ENCODE measurements at regions of chr3 and their contacts with region 1.

Region 1: GRCh38 chr3:25594007-25594502 is 70.7 kb downstream of the TOP2B start:
- DNase-seq: no peak
- ATAC-seq: peak; percentile 52 to 58
- H3K4me3 ChIP-seq: no peak overlapping the region
- H3K27ac ChIP-seq: no peak overlapping the region
- H3K4me1 ChIP-seq: peaks cover 23% of the 10 kb centered on the region
- H3K27me3 ChIP-seq: no peaks in the 10 kb centered on the region
- CTCF ChIP-seq: peak; percentile 80

Region 2: GRCh38 chr3:24773798-24774197 is 820.3 kb before region 1 on chr3:
- intact Hi-C with region 1: loop called (anchors 10 kb)
- DNase-seq: no peak
- ATAC-seq: peak; percentile 65 to 77
- H3K4me3 ChIP-seq: no peak overlapping the region
- H3K27ac ChIP-seq: no peak overlapping the region
- H3K4me1 ChIP-seq: no peaks in the 10 kb centered on the region
- H3K27me3 ChIP-seq: no peaks in the 10 kb centered on the region
- CTCF ChIP-seq: peak; percentile 75

Region 3: DNA sequence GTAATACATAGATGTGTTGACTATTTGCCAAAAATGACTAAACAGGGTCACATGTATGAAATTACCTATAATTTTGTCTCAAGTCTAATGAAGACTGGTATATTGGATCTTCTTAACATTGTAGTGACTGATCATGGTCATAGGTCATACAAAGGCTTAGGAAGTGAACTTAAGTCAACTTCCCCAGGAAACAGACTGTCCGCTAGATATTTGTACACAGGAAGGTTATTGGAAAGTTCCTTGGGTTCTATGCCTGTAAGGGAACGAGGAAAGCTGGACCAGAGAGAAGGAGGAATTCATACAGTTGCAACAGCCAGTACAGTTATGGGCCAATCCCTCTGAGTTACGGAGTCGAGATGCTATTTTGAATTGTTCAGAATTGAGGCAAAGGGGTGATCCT is 637.4 kb before region 1 on chr3:
- intact Hi-C with region 1: loop called (anchors 5 kb)
- DNase-seq: no peak
- ATAC-seq: no peak
- H3K4me3 ChIP-seq: no peak overlapping the region
- H3K27ac ChIP-seq: no peak overlapping the region
- H3K4me1 ChIP-seq: no peaks in the 10 kb centered on the region
- H3K27me3 ChIP-seq: no peaks in the 10 kb centered on the region
- CTCF ChIP-seq: no peak